Cardiac septum (tissue), 1 donor: ENCODE measurements at regions of chr2 and their contacts with region 1.

Region 1: GRCh38 chr2:174688079-174688478 is 76.2 kb downstream of the CHRNA1 start:
- DNase-seq: no peak

Region 2: DNA sequence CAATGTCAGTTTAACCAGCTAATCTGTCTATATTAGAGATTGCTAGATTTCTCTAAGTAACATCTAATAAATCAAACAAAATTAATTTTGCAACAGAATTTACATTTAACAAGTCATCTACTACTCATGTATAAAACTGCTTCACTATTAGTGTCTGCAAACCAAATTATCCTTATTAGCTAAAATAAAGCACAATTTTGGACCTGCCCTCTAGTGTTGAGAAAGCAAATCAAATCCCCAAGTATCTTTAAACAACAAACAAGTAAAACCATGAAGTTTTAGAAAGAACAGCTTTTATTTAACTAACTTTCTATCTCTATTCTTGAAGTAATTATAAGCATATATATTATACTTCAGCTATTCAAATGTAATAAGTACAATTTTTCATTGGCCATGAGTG is 609.8 kb before region 1 on chr2:
- intact Hi-C with region 1: no loop called
- DNase-seq: no peak

Region 3: GRCh38 chr2:174465327-174465726 is 222.8 kb before region 1 on chr2:
- intact Hi-C with region 1: no loop called
- DNase-seq: no peak

Region 4: GRCh38 chr2:174577967-174578589 is 110.0 kb before region 1 on chr2:
- intact Hi-C with region 1: loop called (anchors 5 kb)
- DNase-seq: no peak

Region 5: GRCh38 chr2:174603280-174603679 is 84.8 kb before region 1 on chr2:
- intact Hi-C with region 1: loop called (anchors 5 kb)
- DNase-seq: no peak

Region 6: DNA sequence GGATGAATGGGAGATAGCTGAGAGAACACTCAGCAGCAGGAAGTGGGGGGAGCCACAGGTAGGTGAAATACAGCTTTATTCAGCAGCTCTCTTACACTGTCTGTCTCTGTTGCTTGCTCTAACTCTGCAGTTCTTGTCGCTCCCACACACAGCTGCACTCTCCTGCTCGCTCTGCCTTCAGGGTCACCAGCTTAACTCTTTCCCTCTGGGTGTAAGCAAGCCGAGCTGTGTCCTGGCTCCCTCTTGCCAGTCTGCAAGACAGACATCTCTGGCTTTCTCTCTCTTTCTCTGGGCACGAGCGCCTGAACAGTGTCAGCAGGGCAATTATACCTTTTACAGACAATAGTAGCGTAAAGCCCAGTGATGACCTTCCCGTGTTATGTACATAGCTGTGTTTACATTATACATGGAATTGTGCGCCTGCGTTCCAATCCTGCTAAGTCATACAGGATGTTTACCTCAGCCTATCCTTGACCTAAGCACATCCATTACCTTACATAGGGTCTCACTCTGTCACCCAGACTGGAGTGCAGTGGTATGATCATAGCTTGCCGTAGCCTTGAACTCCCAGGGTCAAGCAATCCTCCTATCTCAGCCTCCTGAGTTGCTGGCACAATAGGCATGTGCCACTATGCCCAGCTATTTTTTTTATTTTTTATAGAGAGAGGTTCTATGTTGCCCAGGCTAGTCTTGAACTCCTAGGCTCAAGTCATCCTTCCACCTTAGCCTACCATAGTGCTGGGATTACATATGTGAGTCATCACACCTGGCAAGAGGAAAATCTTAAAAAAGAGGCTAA is 374.9 kb after region 1 on chr2:
- intact Hi-C with region 1: no loop called
- DNase-seq: no peak